Activated T-helper 2 cell treated with anti-CD3 and anti-CD28 coated beads, Interferon-gamma antibody, Interleukin-2, Interleukin-4, amounts not matched to agents 10 μg/mL and 5 μg/mL and 100 μg/mL, durations not matched to agents 14 hours and 24 hours and 36 hours (primary cell): ENCODE measurements at regions of chr3 and their contacts with region 1.

Region 1: GRCh38 chr3:97991293-97991682 is 19.1 kb upstream of the RIOX2 start:
- DNase-seq: no peak
- H3K4me3 Mint-ChIP-seq: peak overlapping the region; percentile 51
- H3K27ac Mint-ChIP-seq: no peak overlapping the region
- H3K4me1 Mint-ChIP-seq: peaks cover 25% of the 10 kb centered on the region
- H3K27me3 Mint-ChIP-seq: peaks cover 6% of the 10 kb centered on the region

Region 2: DNA sequence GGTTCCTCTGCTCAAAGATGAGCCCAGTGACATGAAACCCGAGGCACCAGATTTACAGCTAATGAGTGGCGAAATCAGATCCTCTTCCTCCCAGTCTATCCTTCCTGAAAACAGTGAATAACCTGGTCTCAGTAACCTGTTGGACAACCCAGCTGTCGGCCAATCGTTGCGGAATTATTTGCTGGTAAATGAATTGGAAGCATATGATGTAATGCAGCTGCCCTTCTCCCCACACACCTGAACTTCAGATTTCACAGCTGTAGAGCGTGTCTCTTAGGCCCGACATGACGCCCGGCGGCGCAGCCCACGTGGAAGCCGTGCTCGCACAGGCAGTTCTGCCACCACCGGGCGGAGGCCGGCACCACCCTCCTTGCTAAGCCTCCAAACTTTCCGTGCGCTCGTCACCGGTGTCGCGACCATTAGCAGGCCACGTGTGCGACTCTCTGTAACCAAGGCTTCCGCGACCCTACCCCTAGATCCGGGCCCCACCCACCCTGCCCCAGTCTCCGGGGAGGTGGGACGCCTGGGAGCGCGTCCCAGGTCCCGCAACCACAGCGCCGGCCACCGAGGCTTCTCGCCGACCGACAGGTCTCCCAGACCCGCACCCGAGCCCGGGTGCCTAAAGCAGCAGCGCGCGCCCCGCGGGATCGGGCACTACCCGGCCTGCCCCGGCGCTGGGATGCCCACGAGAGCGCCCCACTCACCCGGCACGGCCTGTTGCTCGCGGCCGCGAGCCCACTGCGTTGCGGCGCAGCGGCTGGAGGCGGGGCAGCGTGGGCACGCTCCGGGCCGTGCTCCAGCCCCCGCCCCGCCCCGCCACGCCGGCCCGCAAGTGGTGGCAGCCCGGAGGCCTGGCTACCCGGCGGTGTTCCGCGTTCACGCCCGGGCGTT is 19.4 kb before region 1 on chr3 and contains the start of gene RIOX2:
- intact Hi-C with region 1: loop called (anchors 2 kb)
- DNase-seq: peak; percentile 75
- H3K4me3 Mint-ChIP-seq: peak within 1 kb of the TSS; percentile 86
- H3K27ac Mint-ChIP-seq: peak within 1 kb of the TSS; percentile 89
- H3K4me1 Mint-ChIP-seq: peaks cover 68% of the 10 kb centered on the region
- H3K27me3 Mint-ChIP-seq: no peaks in the 10 kb centered on the region
- total RNA-seq, gene RIOX2: 59.9 and 63.2 TPM in 2 replicates